ENCODE measurements at regions of chr14 and their contacts with region 1.

Region 1: DNA sequence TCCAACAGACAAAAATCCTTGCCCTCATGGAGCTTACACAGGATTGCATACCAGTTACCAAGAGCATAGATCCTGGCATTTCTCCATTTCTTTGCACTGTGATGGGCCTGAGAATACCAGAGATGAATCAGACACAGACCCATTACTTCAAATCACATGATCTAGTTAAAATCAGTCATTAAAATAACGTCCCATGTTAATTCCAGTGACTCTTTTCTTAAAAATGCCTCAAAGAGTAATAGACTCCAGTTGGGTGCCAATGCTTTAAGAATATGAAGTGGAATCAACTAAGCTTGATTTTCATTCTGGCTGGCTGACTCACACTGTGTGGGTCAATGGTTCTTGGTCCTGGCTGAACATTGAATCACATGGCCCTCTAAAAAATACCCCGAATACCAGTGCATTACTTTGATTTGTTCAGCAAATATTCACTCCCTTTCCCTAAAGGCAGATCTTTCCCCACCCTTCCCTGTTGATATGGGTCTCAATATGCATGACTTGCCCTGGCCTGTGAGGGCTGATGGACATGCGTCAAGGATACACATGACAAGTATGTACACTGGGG is 11.0 kb downstream of the ASB2 start:
- DNase-seq: peak in 1 of 2 donors; percentile 79
- H3K4me3 ChIP-seq: no peak overlapping the region
- H3K27ac ChIP-seq: peak overlapping the region; percentile 95
- H3K4me1 ChIP-seq: peaks cover 11 to 51% of the 10 kb centered on the region in 2 donors
- H3K27me3 ChIP-seq: no peaks in the 10 kb centered on the region
- CTCF ChIP-seq: no peak

Region 2: GRCh38 chr14:93804646-93805045 is 160.7 kb before region 1 on chr14:
- intact Hi-C with region 1: no loop called
- DNase-seq: no peak
- H3K4me3 ChIP-seq: no peak overlapping the region
- H3K27ac ChIP-seq: no peak overlapping the region
- H3K4me1 ChIP-seq: peaks cover 0 to 14% of the 10 kb centered on the region in 2 donors
- H3K27me3 ChIP-seq: peaks cover 3% of the 10 kb centered on the region
- CTCF ChIP-seq: no peak

Region 3: DNA sequence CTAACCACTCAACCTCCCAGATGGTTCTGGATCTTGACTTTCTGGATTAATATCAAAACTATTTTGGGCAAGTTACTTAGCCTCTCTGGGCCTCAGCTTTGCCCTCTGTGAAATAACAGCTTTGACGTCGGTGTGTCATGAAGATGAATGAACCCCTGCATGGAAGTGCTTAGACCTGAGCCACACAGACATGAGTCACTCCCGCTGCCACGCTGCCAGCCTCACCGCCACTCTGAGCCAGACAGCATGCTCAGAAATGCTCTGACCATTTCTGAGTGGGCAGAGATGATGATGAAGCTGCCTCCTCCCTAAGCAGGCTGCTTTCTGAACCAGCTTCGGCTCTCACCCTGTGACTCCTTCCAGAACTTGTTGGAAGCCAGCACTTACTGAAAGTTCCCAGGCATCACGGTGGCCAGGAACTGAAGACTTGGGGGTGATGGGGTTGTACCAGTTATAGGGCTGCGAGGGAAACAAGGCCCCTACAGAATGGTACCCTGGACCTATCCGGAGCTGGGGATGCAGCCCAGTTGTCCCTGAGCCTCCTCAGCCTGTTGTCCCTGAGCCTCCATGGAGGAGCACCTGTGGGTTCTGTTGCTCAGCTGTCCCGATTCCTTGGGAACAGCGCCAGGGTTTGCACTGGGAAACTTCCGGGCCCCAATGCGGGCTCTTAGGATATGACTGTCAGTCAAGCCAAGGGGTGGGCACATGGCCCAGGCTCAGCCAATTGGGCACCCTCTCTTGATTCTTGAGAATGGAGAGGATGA is 29.7 kb after region 1 on chr14:
- intact Hi-C with region 1: loop called (anchors 1 kb)
- DNase-seq: peak; percentile 85 to 96
- H3K4me3 ChIP-seq: peak overlapping the region; percentile 9 to 55
- H3K27ac ChIP-seq: peak overlapping the region; percentile 96 to 97
- H3K4me1 ChIP-seq: peaks cover 9 to 30% of the 10 kb centered on the region in 2 donors
- H3K27me3 ChIP-seq: no peaks in the 10 kb centered on the region
- CTCF ChIP-seq: no peak

Measured in ascending aorta (tissue), 2 donors.